ENCODE measurements at regions of chr10 and their contacts with region 1.

Region 1: DNA sequence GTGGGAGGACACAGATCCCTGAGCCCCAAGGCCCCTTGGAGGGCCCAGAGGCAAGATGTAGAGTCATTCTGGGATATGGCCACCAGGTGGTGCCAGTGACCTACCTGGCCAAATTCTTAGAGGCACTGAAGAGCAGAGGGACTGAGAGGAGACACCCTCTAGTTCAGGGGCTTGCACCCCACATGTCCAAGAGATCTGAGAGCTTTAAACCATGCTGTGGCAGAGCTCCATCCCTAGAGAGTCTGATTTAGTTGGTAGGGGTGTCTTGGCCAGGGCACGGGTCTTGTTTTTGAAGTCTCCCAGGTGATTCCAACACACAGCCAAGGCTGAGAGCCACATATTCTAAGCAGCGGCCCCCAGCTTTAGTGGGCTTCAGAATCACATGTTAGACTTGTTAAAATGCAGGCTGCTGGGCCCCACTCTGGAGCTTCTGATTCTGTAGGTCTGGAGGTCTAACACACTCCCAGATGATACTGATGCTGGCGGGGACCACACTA is 52.5 kb downstream of the PRF1 start:
- DNase-seq: peak; percentile 75
- H3K4me3 Mint-ChIP-seq: no peak overlapping the region
- H3K27ac Mint-ChIP-seq: no peak overlapping the region
- H3K4me1 Mint-ChIP-seq: no peaks in the 10 kb centered on the region
- H3K27me3 Mint-ChIP-seq: peaks cover 22% of the 10 kb centered on the region
- CTCF ChIP-seq: peak; percentile 87

Region 2: DNA sequence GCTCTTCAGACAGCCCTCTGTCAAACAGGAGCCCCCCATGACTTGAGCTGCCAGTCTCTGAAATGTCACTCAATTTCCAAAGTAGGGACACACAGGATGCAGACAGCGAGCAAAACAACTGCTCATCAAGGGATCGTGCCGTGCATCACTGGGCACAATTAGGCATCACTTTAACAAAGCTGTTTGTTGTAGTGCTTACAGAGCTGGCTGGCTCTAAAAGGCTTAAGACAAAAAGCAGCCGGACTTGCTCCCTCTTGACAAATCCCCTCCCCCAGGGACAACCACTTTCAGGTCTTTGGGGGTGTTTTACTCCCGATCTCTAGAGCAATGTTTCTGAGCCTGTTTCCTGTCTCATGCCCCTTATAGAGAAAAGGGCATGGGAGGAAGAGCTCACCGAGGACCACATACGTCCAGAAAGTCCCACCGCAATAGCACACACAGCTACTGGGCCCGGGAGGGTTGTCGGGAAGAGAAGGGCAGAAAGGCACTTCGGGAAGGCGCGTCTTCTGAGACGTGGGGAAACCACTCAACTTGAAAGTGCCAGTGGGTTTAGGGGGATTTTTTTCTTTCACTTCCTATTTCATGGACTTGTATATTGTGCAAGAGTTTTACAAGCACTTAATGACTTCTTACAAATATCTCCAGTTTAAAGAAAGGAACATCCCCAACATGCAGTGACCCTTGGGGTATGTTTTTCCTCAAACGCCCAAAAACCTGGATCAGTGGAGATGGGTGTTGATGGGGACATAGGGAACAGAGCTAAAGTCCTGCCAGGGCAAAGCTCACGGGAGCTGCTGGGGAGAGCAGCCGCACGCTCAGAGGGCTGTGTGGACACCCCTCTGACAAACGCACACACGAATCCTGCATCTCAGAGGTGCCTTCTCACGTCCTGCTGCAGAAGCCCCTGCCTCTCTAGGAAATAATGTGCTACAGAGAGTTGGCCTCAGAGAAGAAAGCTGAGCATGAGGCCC is 194.7 kb before region 1 on chr10:
- CTCF ChIA-PET with region 1: no interaction called
- POLR2A ChIA-PET with region 1: no interaction called
- intact Hi-C with region 1: no loop called
- DNase-seq: no peak
- H3K4me3 Mint-ChIP-seq: no peak overlapping the region
- H3K27ac Mint-ChIP-seq: no peak overlapping the region
- H3K4me1 Mint-ChIP-seq: peaks cover 21% of the 10 kb centered on the region
- H3K27me3 Mint-ChIP-seq: no peaks in the 10 kb centered on the region
- CTCF ChIP-seq: no peak

Region 3: GRCh38 chr10:70461215-70461986 is 88.6 kb before region 1 on chr10:
- CTCF ChIA-PET with region 1: interaction called, 98 read pairs
- POLR2A ChIA-PET with region 1: no interaction called
- intact Hi-C with region 1: no loop called
- DNase-seq: peak; percentile 74
- H3K4me3 Mint-ChIP-seq: no peak overlapping the region
- H3K27ac Mint-ChIP-seq: no peak overlapping the region
- H3K4me1 Mint-ChIP-seq: peaks cover 23% of the 10 kb centered on the region
- H3K27me3 Mint-ChIP-seq: peaks cover 17% of the 10 kb centered on the region
- CTCF ChIP-seq: peak; percentile 85

Region 4: DNA sequence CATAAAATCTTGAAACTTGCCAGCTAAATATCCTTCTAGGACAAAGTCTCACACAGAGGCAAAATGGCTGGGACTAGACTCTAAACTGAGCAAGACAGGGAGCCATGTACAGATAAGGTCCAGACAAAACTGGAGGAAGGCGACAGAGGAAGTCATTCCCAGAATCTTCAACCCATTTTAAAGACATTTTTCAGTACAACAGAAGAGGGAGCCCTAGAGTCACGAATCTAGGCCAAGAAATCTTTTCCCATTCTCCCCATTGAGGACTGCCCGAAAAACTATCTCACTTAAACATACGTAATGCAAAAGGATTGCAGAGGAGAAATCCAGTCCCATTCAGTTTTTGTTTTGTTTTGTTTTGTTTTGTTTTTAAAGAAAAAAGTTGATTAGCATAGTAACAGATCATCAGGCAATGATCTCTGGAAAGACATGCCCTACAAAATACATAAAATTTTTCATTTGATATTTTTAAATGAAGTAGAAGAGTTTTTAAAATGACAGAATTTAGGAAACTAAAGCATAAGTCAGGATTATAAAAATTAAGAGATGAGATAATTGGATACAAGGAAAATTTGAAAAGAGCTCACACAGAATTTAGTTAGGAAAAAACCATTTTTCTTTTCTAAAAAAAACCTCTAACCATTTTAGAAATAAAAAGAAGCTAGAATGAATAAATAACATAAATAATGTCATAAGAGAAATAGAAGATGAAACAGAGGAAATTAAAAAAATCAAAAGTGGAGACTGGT is 69.4 kb after region 1 on chr10:
- CTCF ChIA-PET with region 1: interaction called, 3 read pairs
- POLR2A ChIA-PET with region 1: no interaction called
- intact Hi-C with region 1: loop called (anchors 5 kb)
- DNase-seq: peak; percentile 54
- H3K4me3 Mint-ChIP-seq: no peak overlapping the region
- H3K27ac Mint-ChIP-seq: no peak overlapping the region
- H3K4me1 Mint-ChIP-seq: peaks cover 10% of the 10 kb centered on the region
- H3K27me3 Mint-ChIP-seq: no peaks in the 10 kb centered on the region
- CTCF ChIP-seq: peak; percentile 48

Region 5: DNA sequence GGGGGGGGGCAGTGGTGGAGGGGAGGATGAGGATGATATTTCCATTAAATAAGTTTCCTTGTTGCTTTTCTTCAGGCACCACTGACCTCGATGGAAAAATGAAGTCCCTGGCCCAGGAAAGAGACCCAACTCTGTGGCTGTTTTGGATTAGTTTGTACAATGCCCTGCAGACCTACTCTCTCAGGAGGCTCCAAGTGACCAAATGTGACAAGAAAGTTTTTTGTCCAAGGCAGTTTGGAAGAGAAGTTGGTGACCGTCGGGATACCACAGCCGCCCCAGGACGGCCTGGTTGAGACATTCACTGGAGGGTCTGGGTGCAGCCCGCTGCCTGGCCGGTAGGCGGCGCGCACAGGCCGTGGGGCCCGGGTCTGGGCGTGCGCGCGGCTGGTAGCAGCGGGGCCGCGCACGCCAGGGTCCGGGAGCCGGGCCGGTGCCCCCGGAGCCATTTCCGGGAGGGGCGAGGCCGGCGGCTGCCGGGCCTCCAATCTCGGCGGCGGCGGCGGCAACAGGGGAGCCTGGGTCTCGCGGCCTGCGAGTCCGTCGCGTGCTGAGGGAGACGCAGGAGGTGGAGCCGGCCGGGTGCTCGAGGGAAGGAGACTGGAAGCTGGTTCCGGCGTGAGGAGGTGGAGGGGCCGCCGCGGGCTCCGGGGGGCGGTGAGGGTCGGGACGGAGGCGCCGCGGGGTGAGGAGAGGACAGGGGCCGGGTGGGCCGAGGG is 265.7 kb after region 1 on chr10 and contains the start of gene SGPL1:
- CTCF ChIA-PET with region 1: interaction called, 3 read pairs
- POLR2A ChIA-PET with region 1: no interaction called
- intact Hi-C with region 1: loop called (anchors 5 kb)
- DNase-seq: peak; percentile 79
- H3K4me3 Mint-ChIP-seq: peak within 1 kb of the TSS; percentile 93
- H3K27ac Mint-ChIP-seq: peak within 1 kb of the TSS; percentile 75
- H3K4me1 Mint-ChIP-seq: peaks cover 10% of the 10 kb centered on the region
- H3K27me3 Mint-ChIP-seq: no peaks in the 10 kb centered on the region
- CTCF ChIP-seq: peak; percentile 96
- total RNA-seq, gene SGPL1: 81.5 and 93.8 TPM in 2 replicates

Region 6: GRCh38 chr10:70880077-70880534 is 330.1 kb after region 1 on chr10:
- CTCF ChIA-PET with region 1: interaction called, 80 read pairs
- POLR2A ChIA-PET with region 1: no interaction called
- intact Hi-C with region 1: loop called (anchors 1 kb)
- DNase-seq: peak; percentile 82
- H3K4me3 Mint-ChIP-seq: no peak overlapping the region
- H3K27ac Mint-ChIP-seq: no peak overlapping the region
- H3K4me1 Mint-ChIP-seq: no peaks in the 10 kb centered on the region
- H3K27me3 Mint-ChIP-seq: no peaks in the 10 kb centered on the region
- CTCF ChIP-seq: peak; percentile 77